B cell (primary cell): ENCODE measurements at regions of chr6 and their contacts with region 1.

Region 1: GRCh38 chr6:10837995-10838793 is at the start of gene MAK:
- DNase-seq: peak; percentile 96
- ATAC-seq: peak; percentile 96
- H3K4me3 ChIP-seq: peak within 1 kb of the TSS; percentile 59 to 78 (median 66)
- H3K4me3 Mint-ChIP-seq: peak within 1 kb of the TSS; percentile 93
- H3K27ac ChIP-seq: peak within 1 kb of the TSS in 1 of 2 donors; percentile 67
- H3K27ac Mint-ChIP-seq: peak within 1 kb of the TSS; percentile 91
- H3K4me1 ChIP-seq: peaks cover 26 to 27% of the 10 kb centered on the region in 2 donors
- H3K4me1 Mint-ChIP-seq: peaks cover 27% of the 10 kb centered on the region
- H3K27me3 ChIP-seq: peaks cover 0 to 40% (median 28%) of the 10 kb centered on the region in 4 experiments
- H3K27me3 Mint-ChIP-seq: peaks cover 55% of the 10 kb centered on the region
- CTCF ChIP-seq: no peak
- total RNA-seq, gene MAK: not detected in 2 replicates

Region 2: GRCh38 chr6:10404107-10404798 is 433.9 kb before region 1 on chr6:
- CTCF ChIA-PET with region 1: no interaction called
- POLR2A ChIA-PET with region 1: no interaction called
- intact Hi-C with region 1: loop called (anchors 2 kb)
- DNase-seq: peak; percentile 91
- ATAC-seq: peak; percentile 87
- H3K4me3 ChIP-seq: peak overlapping the region; percentile 43 to 66 (median 59)
- H3K4me3 Mint-ChIP-seq: peak overlapping the region; percentile 81
- H3K27ac ChIP-seq: peak overlapping the region; percentile 32 to 37
- H3K27ac Mint-ChIP-seq: peak overlapping the region; percentile 56
- H3K4me1 ChIP-seq: peaks cover 14 to 15% of the 10 kb centered on the region in 2 donors
- H3K4me1 Mint-ChIP-seq: peaks cover 13% of the 10 kb centered on the region
- H3K27me3 ChIP-seq: peaks cover 0 to 64% (median 62%) of the 10 kb centered on the region in 4 experiments
- H3K27me3 Mint-ChIP-seq: peaks cover 77% of the 10 kb centered on the region
- CTCF ChIP-seq: no peak

Region 3: GRCh38 chr6:10719296-10719963 is 118.8 kb before region 1 on chr6:
- CTCF ChIA-PET with region 1: no interaction called
- POLR2A ChIA-PET with region 1: no interaction called
- intact Hi-C with region 1: no loop called
- DNase-seq: peak; percentile 56
- ATAC-seq: no peak
- H3K4me3 ChIP-seq: peak overlapping the region in 4 of 5 experiments; percentile 53 to 73 (median 66)
- H3K4me3 Mint-ChIP-seq: peak overlapping the region; percentile 76
- H3K27ac ChIP-seq: no peak overlapping the region
- H3K27ac Mint-ChIP-seq: peak overlapping the region; percentile 59
- H3K4me1 ChIP-seq: peaks cover 16 to 31% of the 10 kb centered on the region in 2 donors
- H3K4me1 Mint-ChIP-seq: peaks cover 32% of the 10 kb centered on the region
- H3K27me3 ChIP-seq: no peaks in the 10 kb centered on the region
- H3K27me3 Mint-ChIP-seq: no peaks in the 10 kb centered on the region
- CTCF ChIP-seq: no peak

Region 4: DNA sequence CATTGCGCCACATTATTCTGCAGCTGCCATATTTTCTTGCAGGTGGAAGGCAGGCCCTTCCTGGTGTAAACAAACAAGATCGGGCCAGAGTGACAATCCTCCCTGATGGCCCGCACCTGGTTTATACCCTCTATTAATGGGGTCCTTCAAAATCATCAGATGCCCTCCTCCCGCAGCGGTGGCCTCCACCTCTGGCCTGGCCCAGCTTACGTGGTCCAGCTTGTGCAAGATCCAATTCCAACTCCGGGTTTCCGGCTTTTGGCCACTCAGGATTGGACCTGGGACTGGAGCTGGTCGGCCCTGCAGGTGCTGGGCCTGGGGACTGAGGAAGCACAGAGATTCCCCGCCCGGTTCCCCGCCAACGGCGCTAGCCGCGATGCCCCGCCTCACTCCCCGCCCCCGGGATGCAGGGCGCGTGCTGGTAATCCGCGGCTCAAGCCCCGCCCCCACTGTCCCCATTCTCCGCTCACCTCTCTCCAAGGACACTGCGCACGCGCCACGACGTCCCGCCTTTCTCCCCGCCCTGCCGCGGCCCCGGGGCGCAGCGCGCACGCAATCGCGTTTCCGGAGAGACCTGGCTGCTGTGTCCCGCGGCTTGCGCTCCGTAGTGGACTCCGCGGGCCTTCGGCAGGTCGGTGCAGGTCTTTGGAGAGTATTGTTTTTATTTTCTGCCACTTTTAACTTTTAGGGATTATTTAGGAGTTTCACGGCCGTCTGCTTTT is 90.8 kb before region 1 on chr6 and contains the start of gene TMEM14B:
- CTCF ChIA-PET with region 1: no interaction called
- POLR2A ChIA-PET with region 1: no interaction called
- intact Hi-C with region 1: loop called (anchors 1 kb)
- DNase-seq: peak; percentile 99
- ATAC-seq: peak; percentile 98
- H3K4me3 ChIP-seq: peak within 1 kb of the TSS; percentile 64 to 89 (median 85)
- H3K4me3 Mint-ChIP-seq: peak within 1 kb of the TSS; percentile 95
- H3K27ac ChIP-seq: peak within 1 kb of the TSS; percentile 56 to 76
- H3K27ac Mint-ChIP-seq: peak within 1 kb of the TSS; percentile 91
- H3K4me1 ChIP-seq: peaks cover 17 to 25% of the 10 kb centered on the region in 2 donors
- H3K4me1 Mint-ChIP-seq: peaks cover 29% of the 10 kb centered on the region
- H3K27me3 ChIP-seq: no peaks in the 10 kb centered on the region
- H3K27me3 Mint-ChIP-seq: no peaks in the 10 kb centered on the region
- CTCF ChIP-seq: no peak
- total RNA-seq, gene TMEM14B: 53.0 and 58.5 TPM in 2 replicates

Region 5: DNA sequence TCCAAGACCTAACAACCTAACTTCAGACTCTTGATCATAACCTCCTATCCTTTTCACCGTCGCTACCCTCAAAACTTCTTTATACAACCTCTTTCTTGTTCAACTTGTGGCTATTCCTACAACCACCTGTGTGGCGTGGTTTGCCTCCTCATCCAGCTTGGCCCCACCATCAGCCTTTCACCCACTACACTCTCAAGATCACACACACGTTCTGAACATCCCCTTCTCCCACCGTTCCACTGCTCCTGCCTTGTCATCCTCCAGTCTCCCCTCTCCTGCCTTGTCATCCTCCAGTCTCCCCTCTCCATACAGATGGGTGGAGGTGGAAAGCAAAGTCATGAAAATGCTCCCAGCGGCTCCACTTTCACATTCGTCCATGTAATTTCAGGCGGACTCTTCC is 13.9 kb before region 1 on chr6:
- CTCF ChIA-PET with region 1: no interaction called
- POLR2A ChIA-PET with region 1: no interaction called
- intact Hi-C with region 1: no loop called
- DNase-seq: no peak
- ATAC-seq: no peak
- H3K4me3 ChIP-seq: no peak overlapping the region
- H3K4me3 Mint-ChIP-seq: no peak overlapping the region
- H3K27ac ChIP-seq: no peak overlapping the region
- H3K27ac Mint-ChIP-seq: no peak overlapping the region
- H3K4me1 ChIP-seq: no peaks in the 10 kb centered on the region
- H3K4me1 Mint-ChIP-seq: no peaks in the 10 kb centered on the region
- H3K27me3 ChIP-seq: no peaks in the 10 kb centered on the region
- H3K27me3 Mint-ChIP-seq: no peaks in the 10 kb centered on the region
- CTCF ChIP-seq: no peak

Region 6: DNA sequence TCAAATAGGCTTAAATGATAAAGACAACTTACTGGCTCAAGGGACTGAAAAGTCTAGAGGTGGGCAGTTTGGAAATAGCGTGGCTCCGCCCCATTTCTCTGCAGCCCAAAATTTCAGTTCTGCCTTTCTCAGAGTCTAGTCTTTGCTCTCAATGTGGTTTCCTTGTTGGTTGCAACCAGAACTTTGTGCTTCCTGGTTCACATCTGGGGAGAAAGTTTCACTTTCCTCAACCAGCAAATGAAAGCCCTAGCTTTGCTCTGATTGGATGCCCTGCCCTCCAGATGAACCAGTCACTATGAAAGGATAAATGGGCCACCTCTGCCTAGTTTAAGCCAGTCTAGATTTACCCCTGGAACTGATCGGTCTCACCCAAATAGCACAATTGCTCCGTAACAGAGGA is 63.6 kb after region 1 on chr6:
- CTCF ChIA-PET with region 1: no interaction called
- POLR2A ChIA-PET with region 1: no interaction called
- intact Hi-C with region 1: loop called (anchors 1 kb)
- DNase-seq: peak; percentile 80
- ATAC-seq: peak; percentile 97
- H3K4me3 ChIP-seq: peak overlapping the region in 4 of 5 experiments; percentile 1 to 52 (median 38)
- H3K4me3 Mint-ChIP-seq: peak overlapping the region; percentile 86
- H3K27ac ChIP-seq: peak overlapping the region; percentile 31 to 70
- H3K27ac Mint-ChIP-seq: peak overlapping the region; percentile 93
- H3K4me1 ChIP-seq: peaks cover 14% of the 10 kb centered on the region in 2 donors
- H3K4me1 Mint-ChIP-seq: peaks cover 17% of the 10 kb centered on the region
- H3K27me3 ChIP-seq: no peaks in the 10 kb centered on the region
- H3K27me3 Mint-ChIP-seq: no peaks in the 10 kb centered on the region
- CTCF ChIP-seq: no peak

Region 7: DNA sequence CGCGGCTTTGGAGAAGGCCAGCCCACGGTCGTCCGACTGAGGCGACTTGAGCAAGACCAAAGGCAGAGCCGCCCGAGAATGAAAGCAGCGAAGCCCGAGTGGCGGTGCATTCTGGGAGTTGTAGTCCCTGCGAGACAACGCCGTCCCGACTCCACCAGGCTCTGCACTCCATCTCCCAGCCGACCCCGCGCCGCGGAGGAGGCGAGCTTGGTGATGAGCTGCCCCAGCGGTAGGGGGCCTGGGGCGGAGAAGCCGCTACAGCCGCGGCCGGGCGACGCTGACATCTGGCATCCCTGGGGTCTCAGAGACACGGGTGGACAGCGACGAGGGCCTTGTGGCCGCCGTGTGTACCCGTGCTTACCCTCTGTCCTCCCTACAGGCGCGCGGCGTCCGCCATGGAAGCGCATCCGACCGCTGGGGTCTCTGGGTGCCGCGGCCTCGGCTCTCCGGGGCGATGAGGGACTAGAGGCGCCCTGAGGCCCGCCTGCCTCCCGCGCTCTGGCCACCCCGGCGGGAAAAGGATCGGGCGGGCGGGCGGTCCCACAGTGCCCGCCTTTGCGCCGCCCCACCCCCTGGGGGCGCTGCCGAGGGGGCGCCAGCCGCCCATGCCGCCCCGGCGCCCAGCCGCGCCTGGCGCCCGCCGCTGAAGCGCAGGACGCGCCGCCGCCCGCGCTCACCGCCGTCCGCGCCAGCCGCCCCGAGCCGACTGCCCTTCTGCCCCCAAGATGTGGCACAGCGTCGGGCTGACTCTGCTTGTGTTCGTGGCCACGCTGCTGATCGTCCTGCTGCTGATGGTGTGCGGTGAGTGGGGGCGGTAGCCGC is 255.6 kb after region 1 on chr6 and contains the start of gene SMIM13:
- CTCF ChIA-PET with region 1: no interaction called
- POLR2A ChIA-PET with region 1: no interaction called
- intact Hi-C with region 1: loop called (anchors 2 kb)
- DNase-seq: peak; percentile 96
- ATAC-seq: peak; percentile 90
- H3K4me3 ChIP-seq: peak within 1 kb of the TSS; percentile 65 to 95 (median 89)
- H3K4me3 Mint-ChIP-seq: peak within 1 kb of the TSS; percentile 97
- H3K27ac ChIP-seq: peak within 1 kb of the TSS; percentile 91 to 93
- H3K27ac Mint-ChIP-seq: peak within 1 kb of the TSS; percentile 97
- H3K4me1 ChIP-seq: peaks cover 12% of the 10 kb centered on the region in 2 donors
- H3K4me1 Mint-ChIP-seq: peaks cover 22% of the 10 kb centered on the region
- H3K27me3 ChIP-seq: no peaks in the 10 kb centered on the region
- H3K27me3 Mint-ChIP-seq: peaks cover 3% of the 10 kb centered on the region
- CTCF ChIP-seq: peak; percentile 74
- total RNA-seq, gene SMIM13: 5.5 and 7.0 TPM in 2 replicates

Region 8: GRCh38 chr6:11172501-11173332 is 334.5 kb after region 1 on chr6:
- CTCF ChIA-PET with region 1: no interaction called
- POLR2A ChIA-PET with region 1: no interaction called
- intact Hi-C with region 1: no loop called
- DNase-seq: peak; percentile 82
- ATAC-seq: peak; percentile 68
- H3K4me3 ChIP-seq: peak overlapping the region in 3 of 5 experiments; percentile 5 to 44 (median 25)
- H3K4me3 Mint-ChIP-seq: peak overlapping the region; percentile 64
- H3K27ac ChIP-seq: no peak overlapping the region
- H3K27ac Mint-ChIP-seq: no peak overlapping the region
- H3K4me1 ChIP-seq: peaks cover 7 to 9% of the 10 kb centered on the region in 2 donors
- H3K4me1 Mint-ChIP-seq: peaks cover 9% of the 10 kb centered on the region
- H3K27me3 ChIP-seq: no peaks in the 10 kb centered on the region
- H3K27me3 Mint-ChIP-seq: no peaks in the 10 kb centered on the region
- CTCF ChIP-seq: peak; percentile 90

Region 9: GRCh38 chr6:11537229-11538051 is 699.2 kb after region 1 on chr6 and contains the start of gene TMEM170B:
- CTCF ChIA-PET with region 1: no interaction called
- POLR2A ChIA-PET with region 1: no interaction called
- intact Hi-C with region 1: loop called (anchors 5 kb)
- DNase-seq: peak; percentile 99
- ATAC-seq: peak; percentile 93
- H3K4me3 ChIP-seq: peak within 1 kb of the TSS; percentile 68 to 83 (median 80)
- H3K4me3 Mint-ChIP-seq: peak within 1 kb of the TSS; percentile 87
- H3K27ac ChIP-seq: peak within 1 kb of the TSS; percentile 19 to 83
- H3K27ac Mint-ChIP-seq: peak within 1 kb of the TSS; percentile 92
- H3K4me1 ChIP-seq: peaks cover 8 to 11% of the 10 kb centered on the region in 2 donors
- H3K4me1 Mint-ChIP-seq: peaks cover 16% of the 10 kb centered on the region
- H3K27me3 ChIP-seq: no peaks in the 10 kb centered on the region
- H3K27me3 Mint-ChIP-seq: peaks cover 8% of the 10 kb centered on the region
- CTCF ChIP-seq: no peak
- total RNA-seq, gene TMEM170B: 3.2 and 3.4 TPM in 2 replicates